Natural killer cell (primary cell): ENCODE measurements at regions of chr19 and their contacts with region 1.

Region 1: GRCh38 chr19:51367565-51368365 is 1.0 kb downstream of the CLDND2 start:
- DNase-seq: peak; percentile 94 to 95
- ATAC-seq: peak; percentile 68 to 92 (median 69)
- H3K4me3 ChIP-seq: peak overlapping the region; percentile 95
- H3K4me3 Mint-ChIP-seq: peak overlapping the region; percentile 98
- H3K27ac ChIP-seq: peak overlapping the region; percentile 88
- H3K27ac Mint-ChIP-seq: peak overlapping the region; percentile 88 to 94
- H3K4me1 ChIP-seq: peaks cover 82% of the 10 kb centered on the region
- H3K4me1 Mint-ChIP-seq: peaks cover 54 to 80% of the 10 kb centered on the region in 2 donors
- H3K27me3 ChIP-seq: no peaks in the 10 kb centered on the region
- H3K27me3 Mint-ChIP-seq: no peaks in the 10 kb centered on the region
- CTCF ChIP-seq: no peak

Region 2: DNA sequence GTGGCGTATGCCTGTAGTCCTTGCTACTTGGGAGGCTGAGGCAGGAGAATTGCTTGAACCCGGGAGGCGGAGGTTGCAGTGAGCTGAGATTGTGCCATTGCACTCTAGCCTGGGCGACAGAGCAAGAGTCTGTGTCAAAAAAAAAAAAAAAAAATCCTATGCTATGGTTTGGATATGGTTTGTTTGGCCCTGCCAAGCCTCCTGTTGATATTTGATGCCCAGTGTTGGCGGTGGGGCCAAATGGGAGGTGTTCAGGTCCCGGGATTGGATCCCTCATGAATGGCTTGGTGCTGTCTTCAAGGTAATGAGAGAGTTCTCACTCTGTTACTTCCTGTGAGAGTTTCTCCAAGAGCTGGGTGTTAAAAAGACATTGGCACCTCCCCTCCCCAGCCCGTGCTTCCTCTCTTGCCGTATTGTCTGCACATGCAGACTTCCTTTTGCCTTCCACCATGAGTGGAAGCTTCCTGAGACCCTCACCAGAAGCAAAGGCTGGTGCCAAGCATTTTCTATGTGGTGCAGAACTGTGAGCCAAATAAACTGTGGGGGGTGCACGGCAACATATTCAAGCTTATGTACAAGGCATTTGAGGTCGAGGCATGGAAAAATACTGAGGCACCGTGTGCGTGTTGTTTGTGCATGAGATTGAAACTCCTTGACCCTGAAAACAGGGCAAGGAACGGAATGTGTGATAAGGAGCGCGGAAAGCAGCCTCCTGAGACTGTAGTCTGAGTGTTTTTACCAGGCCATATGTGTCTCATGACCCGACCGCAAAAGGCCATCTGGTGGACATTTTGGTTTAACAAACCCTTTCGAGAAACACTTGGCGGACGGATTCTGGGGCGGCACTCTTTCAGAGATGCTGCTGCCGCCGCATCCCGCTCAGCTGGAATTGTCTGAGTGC is 235.7 kb before region 1 on chr19:
- intact Hi-C with region 1: loop called (anchors 5 kb)
- DNase-seq: peak in 1 of 2 donors; percentile 67
- ATAC-seq: peak; percentile 81 to 94 (median 86)
- H3K4me3 ChIP-seq: no peak overlapping the region
- H3K4me3 Mint-ChIP-seq: peak overlapping the region; percentile 84
- H3K27ac ChIP-seq: peak overlapping the region; percentile 50
- H3K27ac Mint-ChIP-seq: peak overlapping the region; percentile 89 to 93
- H3K4me1 ChIP-seq: peaks cover 84% of the 10 kb centered on the region
- H3K4me1 Mint-ChIP-seq: peaks cover 84 to 86% of the 10 kb centered on the region in 2 donors
- H3K27me3 ChIP-seq: no peaks in the 10 kb centered on the region
- H3K27me3 Mint-ChIP-seq: no peaks in the 10 kb centered on the region
- CTCF ChIP-seq: no peak

Region 3: GRCh38 chr19:51393959-51394836 is 26.4 kb after region 1 on chr19:
- intact Hi-C with region 1: loop called (anchors 1 kb)
- DNase-seq: peak; percentile 91 to 95
- ATAC-seq: peak; percentile 77 to 92 (median 85)
- H3K4me3 ChIP-seq: peak overlapping the region; percentile 49
- H3K4me3 Mint-ChIP-seq: peak overlapping the region; percentile 90
- H3K27ac ChIP-seq: peak overlapping the region; percentile 79
- H3K27ac Mint-ChIP-seq: peak overlapping the region; percentile 96 to 97
- H3K4me1 ChIP-seq: peaks cover 65% of the 10 kb centered on the region
- H3K4me1 Mint-ChIP-seq: peaks cover 66 to 85% of the 10 kb centered on the region in 2 donors
- H3K27me3 ChIP-seq: no peaks in the 10 kb centered on the region
- H3K27me3 Mint-ChIP-seq: no peaks in the 10 kb centered on the region
- CTCF ChIP-seq: no peak

Region 4: DNA sequence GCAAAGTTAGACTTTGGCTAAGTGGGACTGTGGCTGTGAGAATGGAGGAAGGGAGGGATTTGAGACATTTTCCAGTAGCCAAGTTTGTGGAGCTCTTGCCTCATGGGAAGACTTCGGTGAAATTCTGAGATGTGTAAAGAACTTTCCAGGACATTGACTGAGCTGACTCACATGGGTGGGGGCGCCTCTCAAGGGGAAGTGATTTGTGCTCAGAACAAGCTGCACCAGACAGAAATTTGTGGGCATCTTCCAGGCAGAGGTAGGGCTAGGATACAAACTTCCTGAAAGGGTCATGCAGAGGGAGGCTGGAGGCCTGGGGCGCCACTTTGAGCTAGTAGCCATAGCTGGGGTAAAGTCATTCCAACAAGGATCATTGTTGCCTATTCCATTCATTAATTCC is 59.4 kb after region 1 on chr19:
- intact Hi-C with region 1: no loop called
- DNase-seq: no peak
- ATAC-seq: no peak
- H3K4me3 ChIP-seq: no peak overlapping the region
- H3K4me3 Mint-ChIP-seq: no peak overlapping the region
- H3K27ac ChIP-seq: no peak overlapping the region
- H3K27ac Mint-ChIP-seq: no peak overlapping the region
- H3K4me1 ChIP-seq: no peaks in the 10 kb centered on the region
- H3K4me1 Mint-ChIP-seq: peaks cover under 1 to 1% of the 10 kb centered on the region in 2 donors
- H3K27me3 ChIP-seq: no peaks in the 10 kb centered on the region
- H3K27me3 Mint-ChIP-seq: peaks cover 14 to 24% of the 10 kb centered on the region in 2 donors
- CTCF ChIP-seq: no peak